AG04450 (cell line): ENCODE measurements at regions of chr2 and their contacts with region 1.

Region 1: GRCh38 chr2:63588385-63589147 is at the starts of genes MDH1 and WDPCP:
- DNase-seq: peak; percentile 100
- H3K4me3 ChIP-seq: peak within 1 kb of the TSS; percentile 94
- H3K27ac ChIP-seq: peak within 1 kb of the TSS; percentile 91
- H3K27me3 ChIP-seq: no peaks in the 10 kb centered on the region
- CTCF ChIP-seq: no peak
- polyA plus RNA-seq, gene MDH1: 239 and 296 TPM in 2 replicates
- polyA plus RNA-seq, gene WDPCP: 3.9 and 4.7 TPM in 2 replicates

Region 2: GRCh38 chr2:63841254-63842022 is 252.9 kb after region 1 on chr2 and contains the start of gene UGP2:
- CTCF ChIA-PET with region 1: no interaction called
- POLR2A ChIA-PET with region 1: interaction called, 13 read pairs
- DNase-seq: peak; percentile 83
- H3K4me3 ChIP-seq: peak within 1 kb of the TSS; percentile 64
- H3K27ac ChIP-seq: peak within 1 kb of the TSS; percentile 92
- H3K27me3 ChIP-seq: no peaks in the 10 kb centered on the region
- CTCF ChIP-seq: peak; percentile 30; the same call in 1 of the 2 replicates
- polyA plus RNA-seq, gene UGP2: 83.0 and 121 TPM in 2 replicates